Mammary epithelial cell (primary cell): ENCODE measurements at regions of chr18 and their contacts with region 1.

Region 1: DNA sequence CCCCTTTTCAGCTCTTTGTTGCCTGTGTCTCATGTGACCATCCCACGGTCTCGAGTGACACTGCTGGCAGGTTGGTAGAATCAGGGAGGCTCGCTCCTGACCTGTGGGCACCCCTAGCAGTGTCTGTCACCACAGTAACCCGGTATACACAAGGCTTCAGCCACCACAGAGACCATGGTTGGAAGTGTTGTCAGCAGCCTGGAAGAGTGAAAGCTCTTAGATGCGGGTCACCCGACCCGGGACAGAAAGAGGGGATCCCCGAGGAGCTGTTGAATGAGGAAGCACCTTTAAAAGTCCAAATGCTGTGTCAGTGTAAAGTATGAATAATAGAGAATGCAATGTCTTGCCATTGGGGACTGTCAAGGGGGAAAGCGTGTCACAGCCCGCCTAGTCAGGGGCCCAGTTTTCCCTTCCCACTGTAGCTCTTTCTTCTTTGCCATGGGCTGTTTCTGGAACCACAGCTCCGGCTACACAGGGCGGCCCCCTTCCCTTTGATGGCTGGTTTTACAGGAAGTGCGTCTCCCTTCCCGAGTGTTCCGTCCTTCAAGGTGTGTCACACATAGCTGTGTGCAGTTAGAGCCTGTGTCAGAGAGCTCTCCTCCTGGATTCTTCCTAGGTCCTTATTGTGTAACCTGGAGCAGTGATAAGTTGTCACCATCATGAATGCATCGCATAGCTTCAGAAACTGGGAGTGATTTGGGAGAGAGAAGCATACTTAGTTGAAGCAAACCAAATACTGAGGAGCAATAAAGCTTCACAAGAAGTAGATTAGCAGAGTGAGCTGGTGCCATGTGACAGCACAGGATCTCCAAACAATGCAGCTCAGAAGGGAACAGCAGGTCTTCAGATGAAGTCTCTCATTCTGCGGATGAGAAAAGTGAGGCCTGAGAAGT is 81.4 kb downstream of the MTCL1 start:
- DNase-seq: peak; percentile 91
- H3K4me3 ChIP-seq: no peak overlapping the region
- H3K27ac ChIP-seq: peak overlapping the region; percentile 75
- H3K4me1 ChIP-seq: peaks cover 21% of the 10 kb centered on the region
- H3K27me3 ChIP-seq: no peaks in the 10 kb centered on the region
- CTCF ChIP-seq: no peak

Region 2: DNA sequence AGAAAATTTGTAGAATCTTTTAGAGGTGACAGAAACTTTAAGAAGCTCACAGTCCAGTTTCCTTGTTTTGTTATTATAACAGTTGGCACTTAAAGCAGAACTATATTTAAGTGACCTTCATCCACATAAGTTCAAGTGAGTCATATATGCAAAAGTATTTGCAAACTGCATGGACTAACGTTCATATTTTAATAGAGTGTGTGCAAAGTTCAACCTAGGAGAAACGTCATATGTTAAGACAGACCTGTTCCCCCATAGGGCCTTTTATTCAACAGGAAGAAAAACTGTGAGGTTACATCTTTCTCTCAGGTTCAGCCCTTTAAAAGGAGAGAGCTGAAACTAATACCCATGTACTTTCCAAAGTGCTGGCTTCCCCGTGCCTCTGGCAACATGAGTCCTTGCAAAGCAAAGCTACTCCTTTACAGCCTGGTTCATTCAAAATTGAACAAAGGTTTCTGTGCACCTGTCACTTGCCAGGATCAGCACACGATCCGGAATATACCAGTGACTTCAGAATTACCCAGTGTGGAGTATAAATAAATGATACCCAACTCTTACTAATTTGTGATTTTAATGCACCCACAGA is 457.4 kb before region 1 on chr18:
- CTCF ChIA-PET with region 1: no interaction called
- dilution Hi-C with region 1: no loop called
- in situ Hi-C with region 1: no loop called
- intact Hi-C with region 1: no loop called
- DNase-seq: no peak
- H3K4me3 ChIP-seq: no peak overlapping the region
- H3K27ac ChIP-seq: no peak overlapping the region
- H3K4me1 ChIP-seq: no peaks in the 10 kb centered on the region
- H3K27me3 ChIP-seq: no peaks in the 10 kb centered on the region
- CTCF ChIP-seq: no peak

Region 3: DNA sequence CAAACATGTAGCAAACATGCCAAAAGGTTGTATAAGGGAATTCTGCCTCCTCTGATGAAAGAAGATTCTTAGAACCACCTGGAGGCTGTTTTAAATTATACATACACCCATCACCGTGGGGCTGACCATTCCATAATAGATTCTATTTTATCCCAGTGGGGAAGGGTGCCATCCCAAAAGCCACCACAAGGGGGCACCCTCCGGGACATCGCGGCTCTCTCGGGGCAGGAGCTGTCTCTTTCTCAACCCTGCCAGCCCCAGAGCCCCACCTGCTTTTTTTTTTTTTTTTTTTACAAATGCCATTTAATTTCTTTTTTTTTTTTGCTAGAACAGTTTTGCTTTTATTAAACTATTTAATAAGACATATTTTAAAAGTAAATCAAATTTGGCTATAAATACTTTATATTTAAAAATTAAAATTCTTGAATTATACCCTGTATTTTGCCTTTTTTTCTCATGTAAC is 89.9 kb before region 1 on chr18:
- CTCF ChIA-PET with region 1: interaction called, 12 read pairs
- dilution Hi-C with region 1: no loop called
- in situ Hi-C with region 1: no loop called
- intact Hi-C with region 1: no loop called
- DNase-seq: peak; percentile 48
- H3K4me3 ChIP-seq: no peak overlapping the region
- H3K27ac ChIP-seq: no peak overlapping the region
- H3K4me1 ChIP-seq: peaks cover 4% of the 10 kb centered on the region
- H3K27me3 ChIP-seq: no peaks in the 10 kb centered on the region
- CTCF ChIP-seq: peak; percentile 78 to 87